ENCODE measurements at regions of chr12 and their contacts with region 1.

Region 1: DNA sequence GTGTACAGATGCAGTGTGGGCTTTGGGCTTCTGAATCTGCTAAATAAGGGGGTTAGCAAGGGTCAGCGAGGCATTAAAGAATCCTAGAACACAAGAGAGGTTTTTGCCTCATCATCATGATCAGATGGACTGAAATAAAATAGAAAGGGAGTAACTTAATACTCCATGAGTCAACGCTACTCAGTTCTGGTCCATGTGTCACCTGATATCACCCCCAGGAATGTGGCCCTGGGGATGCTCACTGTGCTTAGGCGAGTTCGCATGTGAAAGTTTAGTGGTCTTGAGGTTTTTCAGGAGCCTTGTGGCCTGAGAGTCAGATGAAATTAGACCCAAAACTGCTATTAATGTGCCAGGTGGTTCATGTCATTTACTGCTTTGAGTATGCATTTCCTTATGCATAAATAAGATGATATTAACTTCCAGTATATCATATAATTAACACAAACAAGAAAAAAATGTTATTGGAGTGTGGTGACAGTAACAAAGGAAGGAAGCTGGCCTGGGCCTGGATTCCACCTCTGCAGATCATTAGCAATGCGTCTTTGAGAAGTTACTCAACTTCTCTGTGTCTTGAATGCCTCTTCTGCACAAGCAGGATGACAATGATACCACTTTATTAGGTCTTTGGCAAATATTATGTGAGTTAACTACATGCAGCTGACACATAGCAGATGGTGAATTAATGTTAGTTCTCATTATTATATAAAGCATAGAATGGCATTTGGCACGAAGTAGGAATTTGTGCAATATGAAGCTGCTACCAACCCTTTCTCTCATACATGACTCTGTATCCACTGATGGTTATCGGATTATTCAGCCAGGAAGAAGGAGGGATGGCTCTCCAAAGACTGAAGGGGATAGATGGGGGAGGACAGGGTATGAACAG is 1272.6 kb downstream of the AACS start:
- DNase-seq: peak; percentile 90
- H3K4me3 ChIP-seq: no peak overlapping the region
- H3K27ac ChIP-seq: peak overlapping the region; percentile 88
- H3K4me1 ChIP-seq: peaks cover 31% of the 10 kb centered on the region
- H3K27me3 ChIP-seq: no peaks in the 10 kb centered on the region
- CTCF ChIP-seq: no peak

Region 2: DNA sequence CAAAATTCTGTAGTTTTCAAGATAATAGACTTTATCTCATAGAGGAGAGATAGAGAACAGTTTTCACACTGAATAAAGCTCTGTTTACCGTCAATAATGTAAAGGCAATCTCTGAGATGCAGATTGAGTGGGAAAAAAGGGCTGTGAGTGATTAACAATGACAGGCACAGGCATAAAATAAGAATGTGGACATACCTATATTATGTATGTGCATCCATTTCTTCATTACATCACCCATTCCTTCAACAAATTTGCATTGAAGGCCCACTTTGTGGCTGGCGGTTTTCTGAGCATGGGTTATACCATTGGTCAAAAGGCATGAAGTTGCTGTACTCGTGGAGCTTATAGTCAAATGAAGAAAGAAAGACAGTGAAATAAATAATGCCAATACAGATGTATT is 158.4 kb after region 1 on chr12:
- CTCF ChIA-PET with region 1: no interaction called
- POLR2A ChIA-PET with region 1: interaction called, 12 read pairs
- intact Hi-C with region 1: no loop called
- DNase-seq: no peak
- H3K4me3 ChIP-seq: no peak overlapping the region
- H3K27ac ChIP-seq: no peak overlapping the region
- H3K4me1 ChIP-seq: peaks cover 4% of the 10 kb centered on the region
- H3K27me3 ChIP-seq: no peaks in the 10 kb centered on the region
- CTCF ChIP-seq: no peak

Region 3: DNA sequence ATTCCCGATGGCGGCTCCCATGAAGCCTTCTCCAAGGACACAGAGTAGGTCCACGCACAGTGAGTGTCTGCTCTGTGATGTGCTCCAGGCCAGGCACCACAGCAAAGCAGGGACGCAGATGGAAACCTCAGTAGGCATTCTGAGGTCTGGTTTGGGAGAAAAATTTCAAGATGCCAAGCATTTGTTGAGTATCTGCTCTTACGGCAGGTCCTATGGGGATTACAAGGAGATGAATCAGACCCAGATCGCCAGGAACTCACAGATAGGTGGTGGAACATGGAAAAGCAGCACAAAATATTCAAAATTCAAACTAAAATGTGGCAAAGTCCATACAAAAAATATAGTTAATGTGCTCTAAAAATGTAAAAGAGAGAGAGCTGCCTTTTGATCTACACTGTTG is 1244.3 kb after region 1 on chr12:
- CTCF ChIA-PET with region 1: no interaction called
- POLR2A ChIA-PET with region 1: no interaction called
- intact Hi-C with region 1: no loop called
- DNase-seq: no peak
- H3K4me3 ChIP-seq: no peak overlapping the region
- H3K27ac ChIP-seq: no peak overlapping the region
- H3K4me1 ChIP-seq: no peaks in the 10 kb centered on the region
- H3K27me3 ChIP-seq: peaks cover 27% of the 10 kb centered on the region
- CTCF ChIP-seq: no peak